ENCODE measurements at regions of chr1 and their contacts with region 1.

Region 1: GRCh38 chr1:189606795-189607476 is 870.7 kb downstream of the BRINP3 start:
- DNase-seq: no peak
- H3K4me3 ChIP-seq: no peak overlapping the region
- H3K27ac ChIP-seq: no peak overlapping the region
- H3K4me1 ChIP-seq: no peaks in the 10 kb centered on the region
- H3K27me3 ChIP-seq: no peaks in the 10 kb centered on the region
- CTCF ChIP-seq: no peak
- POLR2A ChIP-seq: no peak

Region 2: GRCh38 chr1:190274721-190275120 is 667.8 kb after region 1 on chr1:
- intact Hi-C with region 1: loop called (anchors 5 kb)
- DNase-seq: no peak
- H3K4me3 ChIP-seq: no peak overlapping the region
- H3K27ac ChIP-seq: no peak overlapping the region
- H3K4me1 ChIP-seq: no peaks in the 10 kb centered on the region
- H3K27me3 ChIP-seq: no peaks in the 10 kb centered on the region
- CTCF ChIP-seq: no peak
- POLR2A ChIP-seq: no peak